Adrenal gland (tissue), 19 donors: ENCODE measurements at regions of chr14 and their contacts with region 1.

Region 1: GRCh38 chr14:37874429-37875191 is 279.2 kb downstream of the TTC6 start:
- DNase-seq: peak; percentile 73 to 92 (median 79)
- H3K4me3 ChIP-seq: no peak overlapping the region
- H3K27ac ChIP-seq: no peak overlapping the region
- H3K4me1 ChIP-seq: no peaks in the 10 kb centered on the region
- H3K27me3 ChIP-seq: no peaks in the 10 kb centered on the region
- CTCF ChIP-seq: peak; percentile 69 to 84 (median 78)
- POLR2A ChIP-seq: no peak

Region 2: GRCh38 chr14:37241198-37241597 is 633.4 kb before region 1 on chr14:
- intact Hi-C with region 1: loop called in 1 of 2 experiments (anchors 5 kb)
- DNase-seq: no peak
- H3K4me3 ChIP-seq: no peak overlapping the region
- H3K27ac ChIP-seq: no peak overlapping the region
- H3K4me1 ChIP-seq: no peaks in the 10 kb centered on the region
- H3K27me3 ChIP-seq: no peaks in the 10 kb centered on the region
- CTCF ChIP-seq: no peak
- POLR2A ChIP-seq: no peak

Region 3: GRCh38 chr14:37650021-37650715 is 224.4 kb before region 1 on chr14:
- intact Hi-C with region 1: no loop called
- DNase-seq: no peak
- H3K4me3 ChIP-seq: no peak overlapping the region
- H3K27ac ChIP-seq: no peak overlapping the region
- H3K4me1 ChIP-seq: no peaks in the 10 kb centered on the region
- H3K27me3 ChIP-seq: no peaks in the 10 kb centered on the region
- CTCF ChIP-seq: no peak
- POLR2A ChIP-seq: no peak

Region 4: GRCh38 chr14:37709419-37710195 is 165.0 kb before region 1 on chr14:
- intact Hi-C with region 1: loop called in 1 of 2 experiments (anchors 5 kb)
- DNase-seq: no peak
- H3K4me3 ChIP-seq: no peak overlapping the region
- H3K27ac ChIP-seq: no peak overlapping the region
- H3K4me1 ChIP-seq: no peaks in the 10 kb centered on the region
- H3K27me3 ChIP-seq: no peaks in the 10 kb centered on the region
- CTCF ChIP-seq: peak; percentile 19 to 38 (median 22)
- POLR2A ChIP-seq: no peak